Mammary epithelial cell (primary cell): ENCODE measurements at regions of chr4 and their contacts with region 1.

Region 1: GRCh38 chr4:122836941-122837340 is 10.3 kb downstream of the FGF2 start:
- DNase-seq: peak; percentile 49
- H3K4me3 ChIP-seq: no peak overlapping the region
- H3K27ac ChIP-seq: no peak overlapping the region
- H3K4me1 ChIP-seq: peaks cover 18% of the 10 kb centered on the region
- H3K27me3 ChIP-seq: no peaks in the 10 kb centered on the region
- CTCF ChIP-seq: no peak

Region 2: DNA sequence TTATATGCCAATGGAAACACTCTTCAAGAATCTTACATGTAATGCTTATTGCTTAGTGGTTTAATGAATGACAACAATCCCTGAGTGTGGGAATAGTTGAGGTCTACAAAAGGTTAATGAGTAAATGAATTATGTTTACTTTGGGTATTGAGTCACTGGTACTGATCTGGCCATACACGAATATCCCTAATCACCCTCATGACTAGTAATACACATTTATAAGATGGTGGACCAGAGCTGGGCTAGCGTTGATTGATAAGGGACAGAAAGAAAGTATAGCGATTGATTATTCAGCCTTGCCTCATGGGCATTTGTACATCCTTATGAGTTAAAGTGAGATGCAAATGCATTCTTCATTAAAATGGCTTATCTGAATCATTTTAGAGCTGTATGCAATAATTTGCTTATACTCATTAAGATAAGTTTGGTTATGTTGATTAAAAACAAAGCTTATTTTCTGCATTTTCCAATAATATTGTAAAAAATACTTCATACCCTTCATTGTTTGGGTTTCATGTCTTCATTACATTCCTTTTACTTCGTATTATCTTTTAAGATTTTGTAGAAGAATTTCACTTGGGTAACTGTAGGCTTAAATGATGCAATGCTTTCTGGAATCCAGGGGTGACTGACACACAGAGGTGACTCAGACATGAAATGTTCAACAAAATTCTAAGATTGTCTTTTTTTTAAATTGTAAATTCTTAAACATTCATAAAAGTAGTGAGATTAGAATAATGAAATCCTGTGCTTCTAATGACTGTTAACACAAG is 37.1 kb after region 1 on chr4:
- CTCF ChIA-PET with region 1: no interaction called
- dilution Hi-C with region 1: no loop called
- in situ Hi-C with region 1: no loop called
- intact Hi-C with region 1: loop called (anchors 5 kb)
- DNase-seq: peak; percentile 74
- H3K4me3 ChIP-seq: peak overlapping the region in 1 of 3 experiments; percentile 39
- H3K27ac ChIP-seq: peak overlapping the region; percentile 73
- H3K4me1 ChIP-seq: peaks cover 12% of the 10 kb centered on the region
- H3K27me3 ChIP-seq: no peaks in the 10 kb centered on the region
- CTCF ChIP-seq: no peak